Dorsolateral prefrontal cortex (tissue), 120 donors: ENCODE measurements at regions of chr1 and their contacts with region 1.

Region 1: DNA sequence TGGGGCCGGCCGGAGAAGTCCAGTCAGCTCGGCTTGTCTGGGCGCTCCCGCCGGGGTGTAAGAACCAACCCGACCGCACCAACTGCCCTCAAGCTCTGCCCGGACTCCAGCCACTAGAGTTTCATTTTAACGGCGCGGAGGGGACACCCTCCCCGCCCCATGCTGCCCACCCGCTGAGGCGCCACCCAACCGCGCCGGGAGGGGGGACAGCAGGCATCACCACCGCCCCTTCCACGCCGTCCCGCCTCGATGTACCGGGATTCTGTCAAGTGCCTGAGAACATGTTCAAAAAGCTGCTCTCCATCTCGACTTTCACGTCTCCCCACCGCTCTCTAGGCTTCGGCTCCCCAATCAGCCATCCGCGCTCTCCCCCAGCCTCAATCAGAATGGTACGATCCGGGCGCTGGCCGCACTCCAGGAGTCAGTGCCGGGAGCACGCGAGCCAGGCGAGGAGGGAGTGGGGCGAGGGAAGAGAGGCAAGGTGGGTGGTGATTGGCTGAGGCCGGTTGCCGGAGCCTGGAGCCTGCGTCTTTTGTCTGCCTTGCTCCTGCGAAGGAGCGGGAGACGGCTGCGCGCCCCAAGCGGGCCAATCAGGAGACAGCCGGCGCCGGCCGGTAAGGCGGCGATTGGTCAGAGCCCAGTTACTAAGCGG is at the start of gene PIK3R3:
- DNase-seq: peak; percentile 93 to 99 (median 98)
- H3K4me3 ChIP-seq: peak within 1 kb of the TSS; percentile 55 to 97 (median 79)
- H3K27ac ChIP-seq: peak within 1 kb of the TSS; percentile 62 to 99 (median 96)
- H3K27me3 ChIP-seq: peaks cover 0 to 18% (median 0%) of the 10 kb centered on the region in 45 donors
- CTCF ChIP-seq: peak in 31 of 56 donors; percentile 10 to 55 (median 26)
- total RNA-seq, gene PIK3R3: 17.6 to 51.8 (median 34.2) TPM

Region 2: GRCh38 chr1:46036894-46037839 is 95.5 kb before region 1 on chr1:
- intact Hi-C with region 1: loop called (anchors 2 to 5 kb)
- DNase-seq: peak; percentile 79 to 93 (median 90)
- H3K4me3 ChIP-seq: no peak overlapping the region
- H3K27ac ChIP-seq: peak overlapping the region in 13 of 59 donors; percentile 2 to 62 (median 30)
- H3K27me3 ChIP-seq: no peaks in the 10 kb centered on the region
- CTCF ChIP-seq: peak; percentile 94 to 100 (median 99)

Region 3: GRCh38 chr1:46173361-46173856 is 40.8 kb after region 1 on chr1:
- intact Hi-C with region 1: loop called (anchors 2 to 5 kb)
- DNase-seq: peak in 6 of 10 donors; percentile 38 to 74 (median 58)
- H3K4me3 ChIP-seq: peak overlapping the region in 43 of 59 donors; percentile 0 to 56 (median 33)
- H3K27ac ChIP-seq: peak overlapping the region in 58 of 59 donors; percentile 21 to 98 (median 82)
- H3K27me3 ChIP-seq: no peaks in the 10 kb centered on the region
- CTCF ChIP-seq: peak in 30 of 56 donors; percentile 10 to 43 (median 26)

Region 4: DNA sequence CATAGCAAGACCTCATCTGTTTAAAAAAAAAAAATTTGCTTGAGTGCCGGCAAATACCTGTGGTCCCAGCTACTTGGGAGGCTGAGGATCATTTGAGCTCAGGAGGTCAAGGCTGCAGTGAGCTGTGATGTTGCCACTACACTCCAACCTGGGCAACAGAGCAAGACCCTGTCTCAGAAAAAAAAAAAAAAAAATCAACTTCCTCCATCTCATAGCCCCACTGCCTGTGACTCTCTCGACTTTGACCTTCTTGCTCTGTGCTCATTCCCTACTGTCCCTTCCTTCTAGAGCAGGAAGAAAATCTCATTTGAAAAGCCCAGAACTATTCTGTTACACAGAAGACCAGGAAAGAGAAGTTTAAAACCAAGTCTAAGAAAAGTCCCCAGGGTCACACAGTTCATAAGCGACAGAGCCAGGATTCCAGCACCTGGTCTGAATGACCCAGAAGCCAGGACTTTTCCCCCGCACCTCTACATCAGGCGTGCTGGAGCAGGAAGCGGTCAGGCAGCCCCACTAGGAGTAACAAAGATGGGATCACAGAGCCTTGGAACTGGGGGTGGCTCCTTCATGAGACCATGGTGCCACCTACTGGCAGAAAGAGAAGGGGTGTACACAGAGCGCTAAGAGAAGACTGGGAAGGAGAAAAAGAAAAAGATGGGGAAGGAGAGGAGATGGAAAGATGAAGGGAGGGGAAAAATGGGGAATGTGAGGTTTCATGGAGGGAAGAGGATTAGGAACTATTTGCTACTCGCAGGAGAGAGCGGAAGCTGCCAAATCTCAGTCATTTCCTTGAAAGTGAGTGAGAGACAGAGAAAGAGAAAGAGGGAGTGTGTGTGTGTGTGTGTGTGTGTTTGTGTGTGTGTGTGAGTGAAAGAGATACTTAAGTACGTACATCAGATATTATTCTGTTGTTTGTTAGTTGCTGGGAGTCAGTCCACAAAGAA is 46.8 kb after region 1 on chr1:
- intact Hi-C with region 1: loop called in 1 of 2 experiments (anchors 5 kb)
- DNase-seq: peak; percentile 52 to 89 (median 83)
- H3K4me3 ChIP-seq: peak overlapping the region in 14 of 59 donors; percentile 0 to 34 (median 17)
- H3K27ac ChIP-seq: peak overlapping the region in 5 of 59 donors; percentile 2 to 60 (median 11)
- H3K27me3 ChIP-seq: no peaks in the 10 kb centered on the region
- CTCF ChIP-seq: peak; percentile 70 to 97 (median 92)

Region 5: GRCh38 chr1:46303038-46303871 is 170.6 kb after region 1 on chr1 and contains the starts of genes LRRC41 and UQCRH:
- intact Hi-C with region 1: loop called in 1 of 2 experiments (anchors 5 kb)
- DNase-seq: peak; percentile 95 to 99 (median 97)
- H3K4me3 ChIP-seq: peak within 1 kb of the TSS; percentile 63 to 99 (median 93)
- H3K27ac ChIP-seq: peak within 1 kb of the TSS; percentile 58 to 99 (median 96)
- H3K27me3 ChIP-seq: no peaks in the 10 kb centered on the region
- CTCF ChIP-seq: peak in 21 of 56 donors; percentile 4 to 49 (median 14)
- total RNA-seq, gene LRRC41: 42.8 to 67.4 (median 56.1) TPM
- total RNA-seq, gene UQCRH: 114 to 365 (median 249) TPM

Region 6: DNA sequence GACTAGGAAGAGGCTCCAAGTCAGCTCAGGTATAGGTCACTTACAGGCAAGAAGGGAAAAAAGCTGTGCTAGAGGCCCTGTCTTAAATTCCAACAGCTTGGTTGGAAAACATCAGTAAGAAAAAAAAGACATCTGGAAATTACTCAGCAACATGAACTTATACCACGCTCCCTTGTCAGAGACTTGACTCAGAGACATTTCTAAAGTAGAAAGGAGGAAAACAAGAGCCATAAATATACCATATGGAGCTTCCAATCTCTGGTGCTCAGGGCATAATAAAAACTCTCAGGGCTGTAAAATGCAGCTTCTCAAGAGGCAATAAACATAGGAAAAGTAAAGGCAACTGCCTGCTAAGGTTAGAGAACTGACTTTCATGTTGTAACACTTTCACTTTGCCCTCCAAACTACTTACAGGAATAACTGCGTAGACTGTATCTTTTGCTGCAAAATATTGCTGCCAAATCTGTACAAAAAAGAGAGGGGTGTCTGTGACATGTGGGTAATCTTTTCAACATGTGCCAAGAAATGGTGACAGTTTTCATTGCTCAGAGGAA is 520.8 kb after region 1 on chr1:
- intact Hi-C with region 1: no loop called
- DNase-seq: no peak
- H3K4me3 ChIP-seq: no peak overlapping the region
- H3K27ac ChIP-seq: peak overlapping the region in 19 of 59 donors; percentile 3 to 56 (median 22)
- H3K27me3 ChIP-seq: no peaks in the 10 kb centered on the region
- CTCF ChIP-seq: no peak